ENCODE measurements at regions of chr20 and their contacts with region 1.

Region 1: DNA sequence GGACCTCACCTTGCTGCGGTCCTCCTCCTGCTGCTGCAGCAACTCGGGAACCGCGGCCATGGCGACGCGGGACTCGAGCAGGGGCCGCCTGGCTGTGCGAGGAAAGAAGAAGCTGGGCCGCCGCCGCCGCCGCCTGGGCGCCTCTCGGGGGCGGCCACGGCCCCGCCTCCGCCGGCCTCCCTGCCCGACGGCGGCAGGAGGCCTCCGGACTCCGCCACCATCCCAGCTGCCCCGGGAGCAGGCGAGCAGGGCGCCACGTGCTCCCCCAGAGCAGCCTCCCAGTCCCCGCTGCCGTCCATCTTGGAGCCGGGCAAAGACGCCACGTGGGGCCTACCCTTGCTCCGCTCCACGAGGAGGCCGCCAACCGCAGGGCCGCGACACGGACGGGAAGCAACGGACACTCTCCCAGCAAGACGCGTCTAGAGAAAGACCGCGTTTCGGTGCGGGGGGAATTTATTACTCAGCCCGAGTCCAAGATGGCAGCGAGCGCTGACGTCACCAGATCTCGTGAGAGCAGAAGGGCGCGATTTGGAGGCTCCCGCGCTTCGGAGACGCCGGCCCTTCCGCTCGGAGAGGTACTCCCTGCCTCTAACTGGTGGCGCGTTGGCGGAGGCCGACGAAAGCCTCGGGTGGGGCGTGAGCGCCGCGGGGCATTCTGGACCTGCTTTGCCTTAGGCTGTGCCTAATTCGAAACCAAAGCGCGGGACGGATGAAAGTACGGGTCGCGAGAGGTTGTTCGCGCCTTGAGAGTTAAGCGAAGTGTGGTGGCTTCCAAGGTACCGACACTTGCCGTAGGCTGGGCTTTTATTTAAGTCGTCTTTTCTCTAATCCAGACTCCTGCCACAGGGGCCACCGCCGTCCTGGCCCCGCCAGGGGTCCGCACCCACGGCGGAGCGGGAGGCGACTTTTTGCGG is at the starts of genes MGME1 and SNX5:
- H3K4me3 Mint-ChIP-seq: peak within 1 kb of the TSS; percentile 90
- H3K27ac Mint-ChIP-seq: peak within 1 kb of the TSS; percentile 98
- H3K4me1 Mint-ChIP-seq: peaks cover 60% of the 10 kb centered on the region
- H3K27me3 Mint-ChIP-seq: no peaks in the 10 kb centered on the region

Region 2: GRCh38 chr20:17460119-17460518 is 508.5 kb before region 1 on chr20:
- intact Hi-C with region 1: no loop called
- H3K4me3 Mint-ChIP-seq: no peak overlapping the region
- H3K27ac Mint-ChIP-seq: no peak overlapping the region
- H3K4me1 Mint-ChIP-seq: no peaks in the 10 kb centered on the region
- H3K27me3 Mint-ChIP-seq: no peaks in the 10 kb centered on the region

Region 3: GRCh38 chr20:17863461-17864292 is 104.9 kb before region 1 on chr20:
- intact Hi-C with region 1: no loop called
- H3K4me3 Mint-ChIP-seq: no peak overlapping the region
- H3K27ac Mint-ChIP-seq: no peak overlapping the region
- H3K4me1 Mint-ChIP-seq: peaks cover 20% of the 10 kb centered on the region
- H3K27me3 Mint-ChIP-seq: peaks cover 38% of the 10 kb centered on the region

Region 4: GRCh38 chr20:17916433-17916891 is 52.2 kb before region 1 on chr20:
- intact Hi-C with region 1: loop called (anchors 1 kb)
- H3K4me3 Mint-ChIP-seq: peak overlapping the region; percentile 13
- H3K27ac Mint-ChIP-seq: peak overlapping the region; percentile 88
- H3K4me1 Mint-ChIP-seq: peaks cover 46% of the 10 kb centered on the region
- H3K27me3 Mint-ChIP-seq: peaks cover 12% of the 10 kb centered on the region

Region 5: GRCh38 chr20:17950670-17951069 is 18.0 kb before region 1 on chr20:
- intact Hi-C with region 1: loop called (anchors 1 kb)
- H3K4me3 Mint-ChIP-seq: no peak overlapping the region
- H3K27ac Mint-ChIP-seq: no peak overlapping the region
- H3K4me1 Mint-ChIP-seq: peaks cover 25% of the 10 kb centered on the region
- H3K27me3 Mint-ChIP-seq: no peaks in the 10 kb centered on the region

Region 6: DNA sequence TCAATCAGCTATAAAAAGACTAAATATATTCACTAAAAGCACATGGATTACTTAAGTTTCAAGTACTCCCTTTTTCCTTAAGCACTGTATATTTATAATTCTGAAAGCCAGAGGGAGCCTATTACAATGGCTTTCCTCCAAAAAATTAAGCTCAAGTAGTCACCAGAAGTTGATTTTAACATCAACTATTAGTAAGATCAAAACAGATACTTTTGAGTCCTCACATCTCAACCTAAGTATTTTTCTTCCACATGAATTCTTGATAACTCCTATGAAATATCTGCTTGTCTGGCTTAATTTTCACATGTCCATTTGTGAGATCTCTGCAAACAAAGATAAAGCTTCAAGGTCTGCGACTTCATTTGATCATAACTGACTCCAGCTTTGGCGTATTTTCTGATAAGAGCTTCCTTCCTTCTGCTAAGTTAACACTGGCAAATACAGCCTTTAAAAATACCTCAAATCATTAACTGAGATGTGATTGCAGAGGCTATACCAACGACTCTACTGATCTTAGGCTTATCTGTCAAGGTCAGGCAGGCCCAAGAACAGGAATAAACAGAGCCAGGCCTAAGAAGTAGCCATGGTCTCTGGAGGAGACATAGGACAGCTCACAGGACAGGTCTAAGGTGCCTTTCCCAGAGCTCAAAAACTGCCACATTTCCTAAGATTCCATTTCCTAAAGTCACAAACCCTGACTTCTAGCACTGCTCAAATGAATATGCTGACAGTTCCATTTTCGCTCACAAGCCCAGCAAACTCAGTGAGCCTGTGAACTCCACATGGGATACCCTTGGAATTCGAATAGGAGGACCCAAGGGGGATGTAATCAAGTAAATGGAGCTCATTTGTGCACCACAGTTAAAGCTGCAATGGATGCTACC is 10.0 kb before region 1 on chr20:
- intact Hi-C with region 1: loop called (anchors 2 kb)
- H3K4me3 Mint-ChIP-seq: no peak overlapping the region
- H3K27ac Mint-ChIP-seq: peak overlapping the region; percentile 98
- H3K4me1 Mint-ChIP-seq: peaks cover 78% of the 10 kb centered on the region
- H3K27me3 Mint-ChIP-seq: no peaks in the 10 kb centered on the region

Measured in dendritic cell treated with granulocyte-macrophage colony-stimulating factor and Interleukin-4, amounts not matched to agents 40 ng/mL and 50 ng/mL, for 4 days (primary cell).